IMR-90 (cell line): ENCODE measurements at regions of chr6 and their contacts with region 1.

Region 1: DNA sequence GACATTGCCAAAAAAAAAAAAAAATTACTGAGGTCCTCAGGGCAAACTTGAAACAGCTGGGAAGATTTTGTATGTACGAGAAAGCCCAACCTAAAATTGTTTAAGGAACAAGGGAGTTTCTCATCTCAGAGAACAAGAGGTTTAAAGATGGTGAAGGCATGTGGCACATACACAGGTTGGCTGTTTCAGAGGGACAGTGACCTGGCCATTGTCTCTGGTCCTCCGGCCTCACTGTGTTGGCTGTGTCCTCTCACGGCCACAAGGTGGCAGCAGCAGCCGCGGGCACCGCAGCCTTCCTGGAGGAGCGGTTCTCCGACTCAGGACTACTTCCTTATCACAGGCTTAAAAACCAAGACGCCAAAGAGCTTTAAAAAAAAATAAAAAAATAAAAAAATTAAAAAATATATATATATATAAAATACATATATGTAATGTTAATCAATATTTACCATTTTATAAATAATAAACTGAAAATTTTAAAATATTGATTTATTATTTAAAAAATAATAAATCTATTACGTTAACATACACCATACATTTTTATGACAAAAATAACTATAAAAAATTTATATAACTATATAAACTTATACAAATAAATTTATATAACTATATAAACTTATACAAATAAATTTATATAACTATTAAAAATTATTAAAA is 52.8 kb downstream of the GTF2H5 start:
- DNase-seq: peak; percentile 78
- ATAC-seq: peak; percentile 92
- H3K4me3 ChIP-seq: no peak overlapping the region
- H3K27ac ChIP-seq: no peak overlapping the region
- H3K4me1 ChIP-seq: peaks cover 3% of the 10 kb centered on the region
- H3K27me3 ChIP-seq: no peaks in the 10 kb centered on the region; the same call in 1 of the 2 replicates
- CTCF ChIP-seq: peak; percentile 93
- POLR2A ChIP-seq: peak; percentile 55; the same call in 1 of the 2 replicates
- RAD21 ChIP-seq: peak; percentile 99

Region 2: GRCh38 chr6:158488065-158488464 is 267.2 kb after region 1 on chr6:
- CTCF ChIA-PET with region 1: no interaction called
- POLR2A ChIA-PET with region 1: no interaction called
- dilution Hi-C with region 1: no loop called
- in situ Hi-C with region 1: no loop called
- intact Hi-C with region 1: loop called (anchors 10 kb)
- DNase-seq: peak; percentile 99
- ATAC-seq: peak; percentile 94
- H3K4me3 ChIP-seq: no peak overlapping the region
- H3K27ac ChIP-seq: peak overlapping the region; percentile 60
- H3K4me1 ChIP-seq: peaks cover 9% of the 10 kb centered on the region
- H3K27me3 ChIP-seq: no peaks in the 10 kb centered on the region
- CTCF ChIP-seq: no peak
- POLR2A ChIP-seq: no peak
- RAD21 ChIP-seq: no peak

Region 3: GRCh38 chr6:158518191-158519127 is 297.5 kb after region 1 on chr6:
- CTCF ChIA-PET with region 1: interaction called, 8 read pairs
- POLR2A ChIA-PET with region 1: no interaction called
- dilution Hi-C with region 1: no loop called
- in situ Hi-C with region 1: loop called (anchors 10 kb)
- intact Hi-C with region 1: loop called (anchors 1 kb)
- DNase-seq: peak; percentile 69
- ATAC-seq: peak; percentile 96
- H3K4me3 ChIP-seq: peak overlapping the region; percentile 52
- H3K27ac ChIP-seq: no peak overlapping the region; the same call in 1 of the 2 replicates
- H3K4me1 ChIP-seq: no peaks in the 10 kb centered on the region
- H3K27me3 ChIP-seq: no peaks in the 10 kb centered on the region
- CTCF ChIP-seq: peak; percentile 59
- POLR2A ChIP-seq: no peak
- RAD21 ChIP-seq: peak; percentile 55

Region 4: DNA sequence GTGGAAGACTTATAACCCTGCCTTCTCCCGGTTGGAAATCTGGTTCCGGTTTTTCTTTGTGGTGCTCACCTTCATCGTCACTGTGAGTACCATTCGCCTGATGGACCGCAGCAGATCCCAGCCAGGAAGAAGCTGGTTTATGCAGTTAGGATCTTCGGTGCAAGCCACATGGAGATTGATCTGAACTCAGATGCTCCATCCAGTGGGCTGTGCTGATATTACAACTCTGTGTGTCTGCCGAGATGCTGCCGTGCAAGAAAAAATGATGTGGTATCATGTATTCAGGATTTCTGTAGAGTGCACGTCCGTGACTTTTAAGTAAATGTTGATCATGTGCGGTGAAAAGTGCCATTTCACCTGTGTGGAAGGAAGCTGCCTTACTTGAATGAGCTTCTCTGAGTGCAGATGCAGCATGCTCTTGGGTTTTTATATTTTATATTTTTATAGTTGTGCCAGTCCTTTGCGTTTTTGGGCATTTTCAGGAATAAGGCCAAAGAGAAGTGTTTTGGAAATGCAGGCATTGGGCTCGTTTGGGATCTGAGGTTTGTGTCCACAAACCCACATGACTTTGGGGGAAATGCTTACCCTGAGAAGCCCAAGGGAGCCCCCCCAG is 384.5 kb after region 1 on chr6:
- CTCF ChIA-PET with region 1: interaction called, 12 read pairs
- POLR2A ChIA-PET with region 1: no interaction called
- dilution Hi-C with region 1: no loop called
- in situ Hi-C with region 1: loop called (anchors 5 kb)
- intact Hi-C with region 1: loop called (anchors 1 kb)
- DNase-seq: peak; percentile 77
- ATAC-seq: peak; percentile 99
- H3K4me3 ChIP-seq: no peak overlapping the region
- H3K27ac ChIP-seq: no peak overlapping the region
- H3K4me1 ChIP-seq: no peaks in the 10 kb centered on the region
- H3K27me3 ChIP-seq: no peaks in the 10 kb centered on the region
- CTCF ChIP-seq: peak; percentile 77
- POLR2A ChIP-seq: no peak
- RAD21 ChIP-seq: peak; percentile 84